Activated T-helper 2 cell treated with anti-CD3 and anti-CD28 coated beads, Interferon-gamma antibody, Interleukin-2, Interleukin-4, amounts not matched to agents 10 μg/mL and 5 μg/mL and 100 μg/mL, durations not matched to agents 14 hours and 24 hours and 36 hours (primary cell): ENCODE measurements at regions of chr3 and their contacts with region 1.

Region 1: DNA sequence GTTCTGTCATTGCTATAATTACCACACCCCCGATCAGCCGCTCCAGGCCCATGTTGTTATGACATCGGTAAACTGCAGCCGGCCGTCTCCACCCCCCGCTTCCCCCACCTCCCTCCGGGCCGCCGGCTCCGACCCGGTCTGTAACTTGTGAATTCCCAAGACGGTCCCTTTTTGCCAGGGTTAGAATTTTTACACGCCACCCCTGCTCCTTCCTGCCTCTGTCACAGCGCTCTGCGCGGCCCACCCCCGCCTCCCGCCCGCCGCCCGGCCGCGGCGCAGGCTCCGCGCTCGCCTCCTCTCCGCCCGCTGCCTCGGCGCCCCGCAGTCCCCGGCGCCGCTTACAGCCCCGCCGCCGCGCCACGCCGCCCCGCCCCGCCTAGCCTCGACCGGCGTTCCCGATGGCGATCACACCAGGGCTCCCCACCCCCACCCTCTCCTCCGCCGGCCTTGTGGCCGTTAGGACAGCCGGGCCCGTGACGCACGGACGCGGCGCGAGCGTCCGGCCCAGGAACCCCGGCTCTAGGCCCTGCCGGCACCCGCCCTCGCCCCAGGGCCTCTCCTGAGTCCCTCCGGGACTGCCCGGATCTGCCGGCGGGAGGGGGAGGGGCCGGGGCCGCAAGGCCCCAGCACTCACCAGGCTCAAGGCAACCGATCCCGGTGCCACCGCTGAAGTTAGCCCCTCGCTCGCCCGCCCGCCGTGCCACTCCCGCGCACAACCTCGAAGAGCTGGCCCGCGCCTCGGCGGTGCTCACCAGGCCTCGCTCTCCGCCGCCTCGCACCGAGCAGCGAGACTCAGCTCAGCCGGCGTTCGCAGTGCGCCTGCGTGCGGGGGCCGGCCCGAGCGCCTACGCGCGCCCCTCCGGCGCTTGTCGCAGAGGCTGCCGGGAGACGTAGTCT is at the start of gene KPNA1:
- DNase-seq: peak; percentile 87
- H3K4me3 Mint-ChIP-seq: peak within 1 kb of the TSS; percentile 87
- H3K27ac Mint-ChIP-seq: peak within 1 kb of the TSS; percentile 90
- H3K4me1 Mint-ChIP-seq: peaks cover 28% of the 10 kb centered on the region
- H3K27me3 Mint-ChIP-seq: peaks cover 5% of the 10 kb centered on the region
- total RNA-seq, gene KPNA1: 67.5 and 70.5 TPM in 2 replicates

Region 2: GRCh38 chr3:122415720-122416654 is 98.4 kb before region 1 on chr3 and contains the start of gene WDR5B:
- intact Hi-C with region 1: loop called (anchors 2 kb)
- DNase-seq: peak; percentile 97
- H3K4me3 Mint-ChIP-seq: peak within 1 kb of the TSS; percentile 93
- H3K27ac Mint-ChIP-seq: peak within 1 kb of the TSS; percentile 95
- H3K4me1 Mint-ChIP-seq: peaks cover 22% of the 10 kb centered on the region
- H3K27me3 Mint-ChIP-seq: no peaks in the 10 kb centered on the region
- total RNA-seq, gene WDR5B: 4.9 and 5.5 TPM in 2 replicates

Region 3: DNA sequence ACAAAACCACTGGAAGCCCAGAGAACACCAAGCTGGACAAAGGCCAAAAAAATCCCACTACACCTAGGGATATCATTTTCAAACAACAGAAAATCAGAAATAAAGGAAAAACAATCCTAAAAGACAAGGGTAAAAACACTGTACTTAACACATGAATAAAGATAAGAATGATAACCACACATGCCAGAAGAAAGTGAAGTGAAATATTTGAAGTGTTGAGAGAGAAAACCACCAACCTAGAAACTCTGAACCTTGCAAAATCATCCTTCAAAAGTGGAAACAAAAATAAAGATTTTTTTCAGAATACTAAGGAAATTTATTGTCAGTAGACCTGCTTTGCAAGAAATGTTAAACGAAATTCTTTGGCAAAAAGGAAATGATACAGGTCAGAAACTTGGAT is 44.7 kb before region 1 on chr3:
- intact Hi-C with region 1: loop called (anchors 5 kb)
- DNase-seq: no peak
- H3K4me3 Mint-ChIP-seq: no peak overlapping the region
- H3K27ac Mint-ChIP-seq: no peak overlapping the region
- H3K4me1 Mint-ChIP-seq: peaks cover 47% of the 10 kb centered on the region
- H3K27me3 Mint-ChIP-seq: no peaks in the 10 kb centered on the region

Region 4: DNA sequence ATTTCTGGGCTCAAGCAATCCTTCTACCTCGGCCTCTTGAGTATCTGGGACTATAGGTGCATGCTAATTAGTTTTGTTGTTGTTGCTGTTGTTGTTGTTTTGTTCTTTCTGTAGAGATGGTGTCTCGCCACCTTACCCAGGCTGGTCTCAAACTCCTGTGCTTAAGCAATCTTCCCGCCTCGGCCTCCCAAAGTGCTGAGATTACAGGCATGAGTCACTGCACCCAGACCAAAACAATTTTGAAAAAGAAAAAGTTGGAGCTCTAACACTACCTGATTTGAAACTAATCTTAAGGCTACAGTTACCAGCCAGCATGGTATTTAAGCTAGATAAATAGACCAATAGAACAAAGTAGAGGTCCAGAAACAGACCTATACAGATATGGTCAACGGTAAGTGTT is 29.4 kb before region 1 on chr3:
- intact Hi-C with region 1: loop called (anchors 1 kb)
- DNase-seq: no peak
- H3K4me3 Mint-ChIP-seq: no peak overlapping the region
- H3K27ac Mint-ChIP-seq: no peak overlapping the region
- H3K4me1 Mint-ChIP-seq: peaks cover 43% of the 10 kb centered on the region
- H3K27me3 Mint-ChIP-seq: no peaks in the 10 kb centered on the region

Region 5: GRCh38 chr3:123605789-123606234 is 1091.4 kb after region 1 on chr3:
- intact Hi-C with region 1: no loop called
- DNase-seq: no peak
- H3K4me3 Mint-ChIP-seq: no peak overlapping the region
- H3K27ac Mint-ChIP-seq: no peak overlapping the region
- H3K4me1 Mint-ChIP-seq: peaks cover 9% of the 10 kb centered on the region
- H3K27me3 Mint-ChIP-seq: no peaks in the 10 kb centered on the region